ENCODE measurements at regions of chr9 and their contacts with region 1.

Region 1: GRCh38 chr9:113657703-113658544 is 194.4 kb downstream of the RGS3 start:
- DNase-seq: peak; percentile 82
- H3K4me3 Mint-ChIP-seq: no peak overlapping the region
- H3K27ac Mint-ChIP-seq: no peak overlapping the region
- H3K4me1 Mint-ChIP-seq: peaks cover 10% of the 10 kb centered on the region
- H3K27me3 Mint-ChIP-seq: peaks cover 35% of the 10 kb centered on the region
- CTCF ChIP-seq: peak; percentile 80

Region 2: DNA sequence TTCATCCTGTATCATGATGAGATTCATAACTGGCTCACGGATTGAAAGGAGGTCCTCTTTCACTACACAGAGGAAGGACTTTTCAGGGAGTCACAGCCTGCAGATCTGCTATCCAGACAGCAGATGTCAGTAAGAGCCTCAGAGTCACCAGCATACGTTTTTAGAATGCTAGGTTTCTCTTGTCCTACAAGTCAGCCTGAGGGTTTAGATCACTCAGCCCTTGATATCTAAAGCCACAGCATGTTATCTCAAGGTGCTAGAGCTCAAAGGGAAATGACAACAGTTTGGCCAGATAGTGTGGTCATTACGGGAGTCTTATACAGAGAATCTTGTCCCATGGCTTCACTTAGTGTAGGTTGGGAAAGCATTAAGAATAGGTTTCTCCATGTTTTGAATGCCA is 736.4 kb before region 1 on chr9:
- CTCF ChIA-PET with region 1: no interaction called
- intact Hi-C with region 1: loop called (anchors 10 kb)
- DNase-seq: peak; percentile 7
- H3K4me3 Mint-ChIP-seq: no peak overlapping the region
- H3K27ac Mint-ChIP-seq: no peak overlapping the region
- H3K4me1 Mint-ChIP-seq: peaks cover 12% of the 10 kb centered on the region
- H3K27me3 Mint-ChIP-seq: no peaks in the 10 kb centered on the region
- CTCF ChIP-seq: no peak

Region 3: GRCh38 chr9:113275157-113276131 is 382.5 kb before region 1 on chr9 and contains the starts of genes CDC26 and PRPF4:
- CTCF ChIA-PET with region 1: interaction called, 10 read pairs
- intact Hi-C with region 1: loop called (anchors 1 kb)
- DNase-seq: peak; percentile 93
- H3K4me3 Mint-ChIP-seq: no peak within 1 kb of the TSS
- H3K27ac Mint-ChIP-seq: no peak within 1 kb of the TSS
- H3K4me1 Mint-ChIP-seq: no peaks in the 10 kb centered on the region
- H3K27me3 Mint-ChIP-seq: no peaks in the 10 kb centered on the region
- CTCF ChIP-seq: no peak
- total RNA-seq, gene CDC26: 20.5 and 21.3 TPM in 2 replicates
- total RNA-seq, gene PRPF4: 23.7 TPM in 2 replicates

Region 4: GRCh38 chr9:113446323-113446740 is 211.6 kb before region 1 on chr9:
- CTCF ChIA-PET with region 1: interaction called, 40 read pairs
- intact Hi-C with region 1: loop called (anchors 2 kb)
- DNase-seq: no peak
- H3K4me3 Mint-ChIP-seq: no peak overlapping the region
- H3K27ac Mint-ChIP-seq: no peak overlapping the region
- H3K4me1 Mint-ChIP-seq: no peaks in the 10 kb centered on the region
- H3K27me3 Mint-ChIP-seq: no peaks in the 10 kb centered on the region
- CTCF ChIP-seq: no peak

Region 5: GRCh38 chr9:113609562-113610318 is 48.2 kb before region 1 on chr9:
- CTCF ChIA-PET with region 1: interaction called, 6 read pairs
- intact Hi-C with region 1: loop called (anchors 5 kb)
- DNase-seq: peak; percentile 69
- H3K4me3 Mint-ChIP-seq: peak overlapping the region; percentile 14
- H3K27ac Mint-ChIP-seq: peak overlapping the region; percentile 55
- H3K4me1 Mint-ChIP-seq: peaks cover 31% of the 10 kb centered on the region
- H3K27me3 Mint-ChIP-seq: no peaks in the 10 kb centered on the region
- CTCF ChIP-seq: no peak

Region 6: DNA sequence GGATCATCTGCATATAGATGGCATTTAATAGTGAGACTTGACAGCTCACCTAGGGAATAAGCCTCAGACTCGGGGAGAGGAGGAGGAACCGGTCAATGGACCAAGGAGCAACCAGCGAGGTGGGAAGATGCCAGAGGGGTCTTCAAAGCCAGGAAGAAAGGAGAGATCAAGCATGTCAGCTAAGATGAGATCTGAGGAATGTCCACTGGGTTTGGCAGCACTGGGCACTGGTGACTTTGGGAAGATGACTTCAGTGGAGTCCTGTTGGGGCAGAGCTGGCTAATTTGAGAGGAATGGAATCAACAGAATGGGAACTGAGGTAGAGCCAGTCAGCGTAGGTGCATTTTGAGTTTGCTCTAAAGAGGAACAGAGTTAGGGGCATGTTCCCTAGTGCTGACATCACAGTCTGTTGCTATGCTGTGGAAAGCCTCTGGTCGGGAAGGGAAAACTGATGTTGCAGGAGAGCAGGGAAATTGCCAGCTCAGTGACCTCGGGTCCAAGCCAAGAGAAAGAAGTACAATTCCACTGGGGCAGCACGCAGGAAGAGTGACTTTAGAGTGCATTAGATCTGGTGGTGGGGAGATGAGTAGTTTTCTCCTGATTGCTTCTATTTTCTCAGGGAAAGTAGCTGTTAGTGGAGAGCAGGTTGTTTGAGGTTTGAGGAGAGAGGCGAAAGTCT is 275.1 kb after region 1 on chr9:
- CTCF ChIA-PET with region 1: no interaction called
- intact Hi-C with region 1: no loop called
- DNase-seq: no peak
- H3K4me3 Mint-ChIP-seq: no peak overlapping the region
- H3K27ac Mint-ChIP-seq: no peak overlapping the region
- H3K4me1 Mint-ChIP-seq: no peaks in the 10 kb centered on the region
- H3K27me3 Mint-ChIP-seq: no peaks in the 10 kb centered on the region
- CTCF ChIP-seq: no peak

Measured in Calu3 (cell line).